Activated T-helper 1 cell treated with anti-CD3 and anti-CD28 coated beads, Interleukin-12 subunit alpha, Interleukin-12 subunit beta, Interleukin-2, Interleukin-4 antibody, amounts not matched to agents 30 ng/mL and 10 ng/mL and 1 ng/mL, durations not matched to agents 14 hours and 24 hours and 36 hours (primary cell): ENCODE measurements at regions of chr1 and their contacts with region 1.

Region 1: GRCh38 chr1:59020151-59020997 is 236.5 kb upstream of the JUN start:
- DNase-seq: peak; percentile 51
- H3K4me3 Mint-ChIP-seq: peak overlapping the region; percentile 78
- H3K27ac Mint-ChIP-seq: peak overlapping the region; percentile 94
- H3K4me1 Mint-ChIP-seq: peaks cover 68% of the 10 kb centered on the region
- H3K27me3 Mint-ChIP-seq: no peaks in the 10 kb centered on the region

Region 2: GRCh38 chr1:58968360-58968952 is 51.9 kb before region 1 on chr1:
- intact Hi-C with region 1: loop called (anchors 2 kb)
- DNase-seq: peak; percentile 42
- H3K4me3 Mint-ChIP-seq: peak overlapping the region; percentile 77
- H3K27ac Mint-ChIP-seq: peak overlapping the region; percentile 98
- H3K4me1 Mint-ChIP-seq: peaks cover 76% of the 10 kb centered on the region
- H3K27me3 Mint-ChIP-seq: no peaks in the 10 kb centered on the region

Region 3: GRCh38 chr1:58996341-58997059 is 23.9 kb before region 1 on chr1:
- intact Hi-C with region 1: loop called (anchors 1 kb)
- DNase-seq: no peak
- H3K4me3 Mint-ChIP-seq: peak overlapping the region; percentile 38
- H3K27ac Mint-ChIP-seq: peak overlapping the region; percentile 68
- H3K4me1 Mint-ChIP-seq: peaks cover 62% of the 10 kb centered on the region
- H3K27me3 Mint-ChIP-seq: no peaks in the 10 kb centered on the region

Region 4: GRCh38 chr1:59150577-59151391 is 130.4 kb after region 1 on chr1:
- intact Hi-C with region 1: loop called (anchors 2 kb)
- DNase-seq: peak; percentile 32
- H3K4me3 Mint-ChIP-seq: peak overlapping the region; percentile 2
- H3K27ac Mint-ChIP-seq: peak overlapping the region; percentile 50
- H3K4me1 Mint-ChIP-seq: peaks cover 63% of the 10 kb centered on the region
- H3K27me3 Mint-ChIP-seq: no peaks in the 10 kb centered on the region